Caco-2 (cell line): ENCODE measurements at regions of chr10 and their contacts with region 1.

Region 1: GRCh38 chr10:28334296-28334695 is 31.4 kb upstream of the MPP7 start:
- DNase-seq: peak in 1 of 2 experiments; percentile 53
- H3K4me3 ChIP-seq: no peak overlapping the region
- H3K4me3 Mint-ChIP-seq: peak overlapping the region; percentile 70
- H3K27ac Mint-ChIP-seq: peak overlapping the region; percentile 83
- H3K4me1 ChIP-seq: peaks cover 26% of the 10 kb centered on the region
- H3K4me1 Mint-ChIP-seq: peaks cover 29% of the 10 kb centered on the region
- H3K27me3 ChIP-seq: no peaks in the 10 kb centered on the region
- H3K27me3 Mint-ChIP-seq: no peaks in the 10 kb centered on the region
- CTCF ChIP-seq: no peak

Region 2: GRCh38 chr10:28284123-28284522 is 50.2 kb before region 1 on chr10:
- CTCF ChIA-PET with region 1: interaction called, 3 read pairs
- POLR2A ChIA-PET with region 1: no interaction called
- intact Hi-C with region 1: loop called (anchors 2 kb)
- DNase-seq: peak; percentile 79 to 82
- H3K4me3 ChIP-seq: no peak overlapping the region
- H3K4me3 Mint-ChIP-seq: peak overlapping the region; percentile 23
- H3K27ac Mint-ChIP-seq: peak overlapping the region; percentile 48
- H3K4me1 ChIP-seq: peaks cover 23% of the 10 kb centered on the region
- H3K4me1 Mint-ChIP-seq: peaks cover 52% of the 10 kb centered on the region
- H3K27me3 ChIP-seq: no peaks in the 10 kb centered on the region
- H3K27me3 Mint-ChIP-seq: no peaks in the 10 kb centered on the region
- CTCF ChIP-seq: no peak